Activated T-helper 2 cell treated with anti-CD3 and anti-CD28 coated beads, Interferon-gamma antibody, Interleukin-2, Interleukin-4, amounts not matched to agents 10 μg/mL and 5 μg/mL and 100 μg/mL, durations not matched to agents 14 hours and 24 hours and 36 hours (primary cell): ENCODE measurements at regions of chr11 and their contacts with region 1.

Region 1: GRCh38 chr11:47426061-47426956 is at the start of gene PSMC3:
- DNase-seq: peak; percentile 96
- H3K4me3 Mint-ChIP-seq: peak within 1 kb of the TSS; percentile 99
- H3K27ac Mint-ChIP-seq: peak within 1 kb of the TSS; percentile 99
- H3K4me1 Mint-ChIP-seq: peaks cover 20% of the 10 kb centered on the region
- H3K27me3 Mint-ChIP-seq: no peaks in the 10 kb centered on the region
- total RNA-seq, gene PSMC3: 214 and 219 TPM in 2 replicates

Region 2: DNA sequence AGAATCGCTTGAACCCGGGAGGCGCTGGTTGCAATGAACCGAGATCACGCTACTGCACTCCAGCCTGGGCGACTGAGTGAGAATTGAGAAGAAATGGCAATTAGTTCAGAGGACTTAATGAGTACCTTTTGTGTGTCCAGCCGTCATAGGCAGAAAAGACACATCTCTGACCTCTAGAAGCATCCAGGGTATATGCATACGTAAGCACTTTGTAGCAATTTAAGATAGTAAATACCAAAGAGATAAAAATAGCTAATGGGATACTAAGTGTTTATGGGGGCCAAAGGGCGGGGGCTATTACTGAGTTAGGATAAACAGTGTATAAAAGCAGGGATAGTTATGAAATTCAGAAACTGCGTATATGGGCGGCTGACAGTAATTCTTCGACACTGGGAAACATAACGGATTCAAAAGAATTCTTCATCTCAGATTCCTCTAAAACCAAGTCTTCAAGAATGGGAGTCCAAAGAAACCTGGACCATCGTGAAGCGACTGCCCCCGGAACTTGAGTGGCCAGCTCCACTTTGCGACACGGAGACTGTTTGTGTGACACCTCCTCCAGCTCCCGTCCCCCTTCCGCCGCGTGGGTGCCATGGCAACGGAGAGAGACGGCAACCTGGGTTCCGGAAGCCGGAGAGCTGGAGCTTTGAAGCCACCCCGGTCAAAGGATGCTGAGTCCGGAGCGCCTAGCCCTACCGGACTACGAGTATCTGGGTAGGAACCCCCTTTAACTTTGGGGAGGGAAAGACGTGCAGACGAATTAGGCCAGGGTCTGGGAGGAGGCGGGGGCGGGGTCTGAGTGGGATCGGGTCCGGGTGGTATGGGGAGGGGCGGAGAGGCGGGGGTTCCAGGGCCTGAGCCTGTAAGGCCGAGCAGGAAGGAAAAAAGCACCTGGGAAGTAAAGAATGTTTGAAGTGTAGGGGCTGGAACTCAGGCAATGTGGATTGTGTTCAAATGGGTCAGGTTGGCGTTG is 489.9 kb before region 1 on chr11 and contains the start of gene CSTPP1:
- intact Hi-C with region 1: loop called (anchors 10 kb)
- DNase-seq: peak; percentile 87
- H3K4me3 Mint-ChIP-seq: peak within 1 kb of the TSS; percentile 96
- H3K27ac Mint-ChIP-seq: peak within 1 kb of the TSS; percentile 87
- H3K4me1 Mint-ChIP-seq: peaks cover 18% of the 10 kb centered on the region
- H3K27me3 Mint-ChIP-seq: peaks cover 4% of the 10 kb centered on the region
- total RNA-seq, gene CSTPP1: 17.8 and 19.0 TPM in 2 replicates

Region 3: GRCh38 chr11:47269002-47269828 is 157.1 kb before region 1 on chr11:
- intact Hi-C with region 1: loop called (anchors 1 kb)
- DNase-seq: peak; percentile 80
- H3K4me3 Mint-ChIP-seq: peak overlapping the region; percentile 84
- H3K27ac Mint-ChIP-seq: peak overlapping the region; percentile 97
- H3K4me1 Mint-ChIP-seq: peaks cover 53% of the 10 kb centered on the region
- H3K27me3 Mint-ChIP-seq: no peaks in the 10 kb centered on the region

Region 4: DNA sequence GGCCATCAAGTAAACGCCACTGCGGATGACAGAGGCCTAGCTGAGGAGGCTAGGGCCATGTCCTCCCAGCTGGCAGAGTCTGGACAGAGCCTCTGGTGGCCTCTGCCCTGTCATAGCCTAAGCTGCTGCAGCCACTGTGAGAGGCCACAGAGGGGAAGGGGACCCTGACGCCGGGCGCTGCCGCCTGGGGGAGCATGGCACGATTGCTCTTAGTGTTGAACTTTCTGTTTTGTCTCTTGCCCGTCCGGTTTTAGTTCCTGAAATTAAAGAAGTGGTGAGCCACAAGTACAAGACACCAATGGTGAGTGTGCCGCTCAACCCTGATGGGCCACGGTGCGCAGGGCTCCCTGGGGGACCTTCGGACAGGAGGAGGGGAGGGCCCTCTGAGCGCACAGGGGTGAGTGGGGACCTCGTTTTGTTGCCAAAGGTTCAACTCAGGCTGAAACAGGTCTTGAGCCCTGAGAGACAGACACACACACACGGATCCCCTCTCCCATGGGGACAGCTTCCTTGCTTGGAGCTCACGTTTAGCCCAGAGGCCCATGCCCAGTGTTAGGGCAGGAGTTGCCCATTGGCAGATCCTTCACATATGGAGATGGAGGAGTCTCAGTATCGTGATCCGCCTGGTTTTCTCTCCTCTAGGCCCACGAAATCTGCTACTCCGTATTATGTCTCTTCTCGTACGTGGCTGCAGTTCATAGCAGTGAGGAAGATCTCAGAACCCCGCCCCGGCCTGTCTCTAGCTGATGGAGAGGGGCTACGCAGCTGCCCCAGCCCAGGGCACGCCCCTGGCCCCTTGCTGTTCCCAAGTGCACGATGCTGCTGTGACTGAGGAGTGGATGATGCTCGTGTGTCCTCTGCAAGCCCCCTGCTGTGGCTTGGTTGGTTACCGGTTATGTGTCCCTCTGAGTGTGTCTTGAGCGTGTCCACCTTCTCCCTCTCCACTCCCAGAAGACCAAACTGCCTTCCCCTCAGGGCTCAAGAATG is 97.6 kb before region 1 on chr11:
- intact Hi-C with region 1: no loop called
- DNase-seq: no peak
- H3K4me3 Mint-ChIP-seq: no peak overlapping the region
- H3K27ac Mint-ChIP-seq: no peak overlapping the region
- H3K4me1 Mint-ChIP-seq: no peaks in the 10 kb centered on the region
- H3K27me3 Mint-ChIP-seq: no peaks in the 10 kb centered on the region

Region 5: GRCh38 chr11:47399860-47400767 is 26.2 kb before region 1 on chr11:
- intact Hi-C with region 1: no loop called
- DNase-seq: no peak
- H3K4me3 Mint-ChIP-seq: peak overlapping the region; percentile 76
- H3K27ac Mint-ChIP-seq: peak overlapping the region; percentile 71
- H3K4me1 Mint-ChIP-seq: peaks cover 17% of the 10 kb centered on the region
- H3K27me3 Mint-ChIP-seq: no peaks in the 10 kb centered on the region

Region 6: DNA sequence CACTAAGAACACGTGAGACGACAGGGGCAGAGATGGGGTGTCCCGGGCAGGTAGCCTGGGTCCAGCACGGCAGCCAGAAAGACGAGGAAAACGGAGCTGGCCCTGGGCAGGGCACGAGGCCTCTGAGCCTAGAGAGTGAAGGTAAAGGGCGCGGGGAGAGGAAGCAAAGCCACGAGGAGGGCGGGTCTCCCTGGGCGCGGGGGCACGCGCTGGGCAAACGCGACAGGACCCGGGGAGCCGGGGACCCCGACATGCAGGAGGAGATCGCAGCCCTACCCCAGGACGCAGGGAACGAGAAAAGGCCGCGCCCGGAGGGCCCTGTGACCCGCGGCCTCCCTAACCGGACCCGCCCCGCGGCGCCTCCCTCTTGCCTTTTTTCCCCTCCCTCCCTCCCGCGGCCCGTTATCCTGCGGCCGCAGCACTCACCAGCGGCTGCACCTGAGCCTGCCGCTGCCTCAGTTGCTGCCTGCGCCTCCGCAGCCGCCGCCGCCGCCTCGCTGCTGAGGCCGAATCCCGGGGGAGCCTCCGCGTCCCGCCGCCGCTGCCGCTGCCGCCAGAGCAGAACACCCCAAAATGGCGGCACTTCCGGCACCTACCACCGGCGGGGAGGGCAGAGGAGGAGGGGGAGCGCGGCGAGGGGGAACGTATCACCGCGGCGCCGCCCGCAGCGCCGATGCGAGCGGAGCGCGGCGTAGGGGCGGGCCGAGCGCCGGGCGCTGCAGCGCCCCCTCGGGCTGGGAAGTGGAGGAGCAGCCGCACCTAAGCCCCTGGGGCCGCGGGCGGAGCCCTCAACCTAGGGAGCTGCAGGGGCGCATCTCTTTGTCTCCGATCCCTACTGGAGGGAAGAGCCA is 126.5 kb after region 1 on chr11 and contains the start of gene CELF1:
- intact Hi-C with region 1: loop called (anchors 5 kb)
- DNase-seq: peak; percentile 92
- H3K4me3 Mint-ChIP-seq: peak within 1 kb of the TSS; percentile 100
- H3K27ac Mint-ChIP-seq: peak within 1 kb of the TSS; percentile 95
- H3K4me1 Mint-ChIP-seq: peaks cover 31% of the 10 kb centered on the region
- H3K27me3 Mint-ChIP-seq: no peaks in the 10 kb centered on the region
- total RNA-seq, gene CELF1: 129 and 132 TPM in 2 replicates